Astrocyte of the cerebellum (primary cell): ENCODE measurements at regions of chr4 and their contacts with region 1.

Region 1: DNA sequence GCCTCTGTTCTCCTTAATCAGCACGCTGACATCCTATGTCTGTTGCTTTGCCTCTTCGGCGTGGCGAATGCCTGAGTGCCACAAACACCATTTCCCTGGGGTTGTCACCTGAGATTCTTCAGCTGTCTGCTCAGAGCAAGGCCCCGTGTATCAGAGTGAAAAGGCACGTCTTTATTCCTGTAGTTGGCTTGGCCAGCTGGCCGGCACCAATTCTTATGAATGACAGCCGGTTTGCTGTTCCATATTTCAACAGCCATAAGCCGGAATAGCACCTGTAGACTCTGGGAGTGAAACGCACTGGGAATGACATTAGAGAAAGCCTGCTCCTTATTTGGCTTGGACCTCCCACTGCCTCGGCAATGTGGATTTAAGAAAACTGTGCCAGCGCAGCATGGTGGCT is 89.3 kb downstream of the MGST2 start:
- DNase-seq: no peak
- H3K4me3 ChIP-seq: no peak overlapping the region
- CTCF ChIP-seq: no peak

Region 2: DNA sequence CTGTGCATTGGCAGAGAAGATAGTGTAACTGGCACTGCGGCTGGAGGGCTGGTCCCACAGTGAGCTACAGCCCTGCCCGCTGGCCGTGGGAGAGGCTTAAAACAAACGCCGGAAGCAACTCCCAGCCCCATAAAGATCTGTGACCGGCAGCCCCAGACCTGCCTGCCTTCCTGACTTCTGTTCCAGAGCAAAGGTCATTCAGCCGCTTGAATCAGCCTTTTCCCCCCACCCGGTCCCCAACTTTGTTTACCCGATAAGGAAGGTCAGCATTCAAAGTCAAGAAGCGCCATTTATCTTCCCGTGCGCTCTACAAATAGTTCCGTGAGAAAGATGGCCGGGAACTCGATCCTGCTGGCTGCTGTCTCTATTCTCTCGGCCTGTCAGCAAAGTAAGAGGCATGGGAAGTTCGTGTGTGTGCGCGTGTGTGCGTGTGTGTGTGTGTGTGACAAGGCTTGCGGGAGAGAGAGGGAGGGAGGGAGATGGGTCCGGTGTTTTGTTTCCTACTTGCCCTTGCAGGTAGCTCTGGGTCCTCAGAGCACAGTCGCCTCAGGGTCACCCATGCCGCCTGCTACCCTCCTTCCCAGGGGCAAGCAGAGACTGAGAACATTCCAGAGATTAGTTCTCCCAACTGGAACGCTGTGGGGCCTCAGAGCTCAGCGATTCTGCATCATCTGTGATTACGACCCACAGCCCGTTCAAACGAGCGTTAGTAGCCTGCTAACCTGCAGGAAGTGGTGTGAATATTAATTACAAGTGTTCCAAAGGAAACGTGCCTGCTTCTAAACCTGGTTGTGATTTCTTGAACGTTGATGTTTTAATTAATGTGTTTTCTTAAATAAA is 89.0 kb before region 1 on chr4 and contains the start of gene MGST2:
- in situ Hi-C with region 1: no loop called
- DNase-seq: no peak
- H3K4me3 ChIP-seq: peak within 1 kb of the TSS; percentile 53
- CTCF ChIP-seq: no peak

Region 3: DNA sequence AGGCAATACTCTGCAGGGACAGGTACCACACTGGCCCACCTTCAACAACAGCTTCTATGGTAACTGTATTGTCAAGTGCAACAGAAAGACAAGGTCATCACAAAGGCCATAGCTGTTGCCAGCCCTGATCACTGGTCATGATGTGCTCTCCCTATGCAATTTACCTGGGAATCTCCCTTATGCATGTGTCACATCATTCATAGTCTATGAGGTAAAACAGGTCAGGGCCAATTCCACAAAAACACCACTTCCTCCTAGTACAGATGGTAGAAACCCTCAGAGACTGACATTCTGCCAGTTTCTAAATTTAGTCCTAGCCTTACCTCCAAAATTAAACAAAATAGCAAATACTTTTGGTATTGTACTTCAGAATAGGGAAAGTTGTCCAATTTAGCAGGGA is 43.5 kb after region 1 on chr4:
- in situ Hi-C with region 1: loop called (anchors 5 kb)
- DNase-seq: no peak
- H3K4me3 ChIP-seq: no peak overlapping the region
- CTCF ChIP-seq: no peak